Dorsolateral prefrontal cortex (tissue), 120 donors: ENCODE measurements at regions of chr13 and their contacts with region 1.

Region 1: GRCh38 chr13:45305079-45305478 is 35.9 kb downstream of the TPT1 start:
- DNase-seq: no peak
- H3K4me3 ChIP-seq: no peak overlapping the region
- H3K27ac ChIP-seq: no peak overlapping the region
- H3K27me3 ChIP-seq: peaks cover 0 to 4% (median 0%) of the 10 kb centered on the region in 45 donors
- CTCF ChIP-seq: no peak

Region 2: DNA sequence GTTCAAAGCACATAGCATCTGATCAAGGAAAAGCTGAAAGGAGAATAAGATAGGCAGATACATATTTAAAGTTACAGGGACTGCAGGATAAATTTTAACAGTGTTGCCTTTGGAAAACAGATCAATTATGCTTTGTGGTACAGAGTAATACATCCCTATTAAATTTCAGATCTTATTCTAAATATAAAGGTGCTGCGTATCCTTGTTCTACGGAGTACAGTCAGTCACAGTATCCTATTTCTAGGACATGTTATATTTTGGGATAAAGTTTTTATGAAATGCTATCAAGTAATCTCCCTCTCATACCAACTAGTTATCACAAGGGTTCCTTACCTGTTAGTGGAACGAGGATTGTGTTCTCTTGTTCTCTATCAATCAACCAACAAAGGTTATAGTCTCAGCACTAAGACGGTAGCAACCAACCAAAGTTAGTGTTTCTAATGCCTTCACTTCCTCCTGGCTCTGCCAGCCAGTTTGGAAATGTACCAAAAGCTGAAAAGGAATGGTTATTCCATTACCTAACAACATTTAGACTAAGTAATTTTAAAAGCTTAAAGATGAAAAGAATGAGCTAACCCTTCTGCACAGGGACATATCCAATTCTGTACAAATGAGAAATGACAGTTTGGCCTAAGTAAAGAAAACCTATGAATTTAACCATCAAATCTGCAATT is 764.2 kb before region 1 on chr13:
- intact Hi-C with region 1: no loop called
- DNase-seq: no peak
- H3K4me3 ChIP-seq: peak overlapping the region in 1 of 59 donors; percentile 4
- H3K27ac ChIP-seq: no peak overlapping the region
- H3K27me3 ChIP-seq: no peaks in the 10 kb centered on the region
- CTCF ChIP-seq: no peak

Region 3: GRCh38 chr13:44988973-44989817 is 315.9 kb before region 1 on chr13 and contains the starts of genes GPALPP1 and NUFIP1:
- intact Hi-C with region 1: loop called in 1 of 2 experiments (anchors 5 kb)
- DNase-seq: peak; percentile 92 to 98 (median 96)
- H3K4me3 ChIP-seq: peak within 1 kb of the TSS; percentile 75 to 100 (median 98)
- H3K27ac ChIP-seq: peak within 1 kb of the TSS in 55 of 59 donors; percentile 15 to 96 (median 79)
- H3K27me3 ChIP-seq: no peaks in the 10 kb centered on the region
- CTCF ChIP-seq: peak in 33 of 56 donors; percentile 7 to 49 (median 26)
- total RNA-seq, gene GPALPP1: 33.6 to 63.8 (median 48.2) TPM
- total RNA-seq, gene NUFIP1: 3.6 to 10.1 (median 6.9) TPM